ENCODE measurements at regions of chr2 and their contacts with region 1.

Region 1: DNA sequence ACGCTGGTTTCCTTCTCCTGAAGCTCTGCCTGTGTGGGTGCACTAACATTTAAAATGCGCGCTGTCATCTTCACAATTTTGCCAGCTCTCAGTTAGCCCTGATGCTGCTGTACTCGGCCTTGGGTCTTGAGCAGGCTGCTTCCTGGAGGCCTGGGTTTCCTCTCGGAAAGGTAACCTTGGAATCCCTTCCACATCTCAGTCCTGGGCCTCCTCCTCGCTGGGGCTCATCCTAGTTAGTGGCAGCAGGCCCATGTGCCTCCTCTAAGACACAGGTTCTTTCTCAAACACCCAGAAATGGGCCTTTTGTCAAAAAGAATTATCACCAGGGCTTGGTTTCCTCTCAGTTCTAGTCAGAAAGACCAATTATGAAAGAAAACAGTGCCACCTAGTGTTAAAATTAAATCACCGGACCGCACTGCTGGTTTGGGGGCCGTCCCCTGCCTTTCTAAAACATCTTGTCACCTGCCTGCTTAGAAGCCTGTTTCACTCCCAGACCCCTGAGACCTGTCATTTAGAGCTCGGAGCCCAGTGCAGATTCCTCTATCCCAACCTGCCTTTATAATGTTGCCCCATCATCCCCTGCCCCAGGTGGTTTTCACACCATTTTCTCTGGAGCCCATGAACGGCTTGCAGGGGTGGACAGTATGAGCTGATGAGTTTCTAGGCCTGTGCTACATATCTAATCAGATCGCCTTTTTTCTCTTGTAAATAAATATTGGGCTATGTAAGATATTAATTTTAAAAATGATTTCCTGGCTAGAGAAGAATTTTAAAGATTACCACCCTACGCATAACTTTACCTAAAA is 42.4 kb downstream of the HK2 start:
- DNase-seq: peak; percentile 70
- H3K4me3 Mint-ChIP-seq: no peak overlapping the region
- H3K27ac Mint-ChIP-seq: peak overlapping the region; percentile 61
- H3K4me1 Mint-ChIP-seq: peaks cover 20% of the 10 kb centered on the region
- H3K27me3 Mint-ChIP-seq: no peaks in the 10 kb centered on the region
- CTCF ChIP-seq: peak; percentile 62

Region 2: GRCh38 chr2:74690571-74690970 is 185.7 kb before region 1 on chr2:
- CTCF ChIA-PET with region 1: interaction called, 95 read pairs
- POLR2A ChIA-PET with region 1: interaction called, 5 read pairs
- intact Hi-C with region 1: loop called (anchors 1 kb)
- DNase-seq: peak; percentile 75
- H3K4me3 Mint-ChIP-seq: no peak overlapping the region
- H3K27ac Mint-ChIP-seq: no peak overlapping the region
- H3K4me1 Mint-ChIP-seq: peaks cover 6% of the 10 kb centered on the region
- H3K27me3 Mint-ChIP-seq: no peaks in the 10 kb centered on the region
- CTCF ChIP-seq: peak; percentile 89

Region 3: DNA sequence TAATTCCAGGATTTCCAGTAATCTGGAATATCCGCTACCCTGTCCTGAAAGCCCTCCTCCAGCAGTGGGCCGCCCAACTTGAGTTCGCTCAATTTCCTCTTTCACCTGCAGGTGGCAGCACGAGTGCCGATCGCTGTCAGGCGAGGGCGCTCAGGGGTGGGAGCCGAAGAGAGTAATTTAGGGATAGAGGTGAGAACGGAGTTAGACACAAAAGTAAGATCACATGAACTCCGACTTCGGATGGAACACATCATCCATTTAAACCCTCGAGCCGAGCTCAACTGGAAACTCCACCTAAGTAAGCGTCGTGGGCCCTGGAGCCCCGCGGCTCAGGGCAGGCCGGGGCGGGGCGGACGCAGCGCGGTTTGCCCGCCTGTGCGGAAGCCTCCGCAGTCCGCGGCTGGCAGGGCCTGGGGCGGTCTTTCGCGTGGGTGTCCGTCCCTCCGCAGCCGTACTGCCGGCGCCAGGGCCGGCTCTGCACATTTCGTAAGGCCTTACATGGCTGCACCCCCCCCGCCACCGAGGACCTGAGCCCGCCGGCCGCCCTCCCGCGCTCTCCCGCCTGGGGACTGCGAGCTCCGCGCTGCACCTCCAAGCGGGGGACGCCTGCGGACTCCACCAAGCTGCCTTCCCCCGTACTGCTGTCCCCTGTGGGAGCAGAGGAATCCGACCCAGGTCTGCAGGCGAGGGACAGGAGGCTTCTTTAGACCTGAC is 161.0 kb before region 1 on chr2:
- CTCF ChIA-PET with region 1: interaction called, 219 read pairs
- POLR2A ChIA-PET with region 1: interaction called, 16 read pairs
- intact Hi-C with region 1: loop called (anchors 1 kb)
- DNase-seq: peak; percentile 84
- H3K4me3 Mint-ChIP-seq: peak overlapping the region; percentile 79
- H3K27ac Mint-ChIP-seq: no peak overlapping the region
- H3K4me1 Mint-ChIP-seq: no peaks in the 10 kb centered on the region
- H3K27me3 Mint-ChIP-seq: no peaks in the 10 kb centered on the region
- CTCF ChIP-seq: peak; percentile 73

Region 4: DNA sequence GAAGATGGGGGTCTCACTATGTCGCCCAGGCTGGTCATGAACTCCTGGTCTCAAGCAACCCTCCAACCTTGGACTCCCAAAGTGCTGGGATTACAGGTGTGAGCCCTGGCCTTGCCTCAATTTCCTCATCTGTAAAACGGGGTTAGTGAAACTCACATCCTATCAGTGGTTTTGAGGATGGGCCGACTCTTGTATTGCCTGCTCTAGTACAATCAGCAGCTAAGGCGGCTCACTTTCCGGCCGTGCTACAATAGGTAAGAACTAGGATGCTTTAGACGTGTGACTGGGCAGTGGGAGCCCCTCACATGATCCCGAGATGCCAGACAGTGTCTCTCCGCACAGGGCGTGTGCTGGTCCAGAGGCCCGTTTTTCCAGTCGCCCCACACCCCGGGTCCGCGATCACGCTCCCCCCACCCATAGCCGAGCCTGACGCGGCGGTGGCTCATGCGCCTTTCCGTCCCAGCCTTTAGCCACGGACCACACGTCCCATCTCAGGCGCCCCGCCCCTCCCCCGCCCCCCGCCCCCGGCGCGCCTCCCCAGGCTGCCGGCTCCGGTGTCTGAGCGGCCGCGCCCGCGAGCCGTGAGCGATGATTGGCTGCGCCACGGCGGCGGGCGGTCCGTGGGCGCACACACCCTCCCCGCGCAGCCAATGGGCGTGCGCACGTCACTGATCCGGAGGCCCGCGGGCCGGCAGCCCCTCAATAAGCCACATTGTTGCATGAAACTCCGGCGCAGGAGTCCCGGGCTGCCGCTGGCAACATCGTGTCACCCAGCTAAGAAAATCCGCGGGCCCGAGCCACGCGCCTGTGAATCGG is 42.7 kb before region 1 on chr2 and contains the start of gene HK2:
- CTCF ChIA-PET with region 1: interaction called, 140 read pairs
- POLR2A ChIA-PET with region 1: interaction called, 38 read pairs
- intact Hi-C with region 1: loop called (anchors 1 kb)
- DNase-seq: peak; percentile 88
- H3K4me3 Mint-ChIP-seq: peak within 1 kb of the TSS; percentile 85
- H3K27ac Mint-ChIP-seq: peak within 1 kb of the TSS; percentile 86
- H3K4me1 Mint-ChIP-seq: peaks cover 34% of the 10 kb centered on the region
- H3K27me3 Mint-ChIP-seq: no peaks in the 10 kb centered on the region
- CTCF ChIP-seq: no peak
- total RNA-seq, gene HK2: 40.4 and 47.8 TPM in 2 replicates

Region 5: GRCh38 chr2:74854401-74854800 is 21.9 kb before region 1 on chr2:
- CTCF ChIA-PET with region 1: interaction called, 18 read pairs
- POLR2A ChIA-PET with region 1: interaction called, 6 read pairs
- intact Hi-C with region 1: no loop called
- DNase-seq: no peak
- H3K4me3 Mint-ChIP-seq: no peak overlapping the region
- H3K27ac Mint-ChIP-seq: no peak overlapping the region
- H3K4me1 Mint-ChIP-seq: peaks cover 28% of the 10 kb centered on the region
- H3K27me3 Mint-ChIP-seq: no peaks in the 10 kb centered on the region
- CTCF ChIP-seq: no peak

Region 6: GRCh38 chr2:74887445-74887951 is 11.2 kb after region 1 on chr2:
- CTCF ChIA-PET with region 1: interaction called, 21 read pairs
- POLR2A ChIA-PET with region 1: interaction called, 3 read pairs
- intact Hi-C with region 1: no loop called
- DNase-seq: peak; percentile 73
- H3K4me3 Mint-ChIP-seq: no peak overlapping the region
- H3K27ac Mint-ChIP-seq: peak overlapping the region; percentile 69
- H3K4me1 Mint-ChIP-seq: peaks cover 6% of the 10 kb centered on the region
- H3K27me3 Mint-ChIP-seq: no peaks in the 10 kb centered on the region
- CTCF ChIP-seq: no peak

Region 7: DNA sequence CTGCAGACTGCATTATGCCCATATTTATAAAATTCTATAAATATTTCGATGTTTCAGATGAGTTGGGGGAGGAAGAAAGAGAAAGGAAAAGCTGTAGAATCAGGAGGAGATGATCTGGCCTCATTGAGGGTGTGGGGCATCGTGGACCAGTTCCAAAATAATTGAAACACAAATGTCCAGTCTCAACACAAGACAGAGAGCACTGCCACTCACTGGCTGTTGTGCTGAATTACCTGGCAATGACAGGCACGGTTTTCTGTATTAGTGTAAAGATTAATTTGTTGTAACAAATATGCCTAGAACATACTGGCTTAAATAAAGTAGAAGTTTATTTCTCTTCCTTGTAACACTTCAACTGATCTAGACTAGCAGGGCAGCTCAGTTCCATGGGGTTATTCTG is 106.3 kb after region 1 on chr2:
- CTCF ChIA-PET with region 1: interaction called, 14 read pairs
- POLR2A ChIA-PET with region 1: no interaction called
- intact Hi-C with region 1: loop called (anchors 10 kb)
- DNase-seq: peak; percentile 55
- H3K4me3 Mint-ChIP-seq: no peak overlapping the region
- H3K27ac Mint-ChIP-seq: no peak overlapping the region
- H3K4me1 Mint-ChIP-seq: no peaks in the 10 kb centered on the region
- H3K27me3 Mint-ChIP-seq: no peaks in the 10 kb centered on the region
- CTCF ChIP-seq: peak; percentile 43

Measured in MCF 10A (cell line).